AG04450 (cell line): ENCODE measurements at regions of chr5 and their contacts with region 1.

Region 1: DNA sequence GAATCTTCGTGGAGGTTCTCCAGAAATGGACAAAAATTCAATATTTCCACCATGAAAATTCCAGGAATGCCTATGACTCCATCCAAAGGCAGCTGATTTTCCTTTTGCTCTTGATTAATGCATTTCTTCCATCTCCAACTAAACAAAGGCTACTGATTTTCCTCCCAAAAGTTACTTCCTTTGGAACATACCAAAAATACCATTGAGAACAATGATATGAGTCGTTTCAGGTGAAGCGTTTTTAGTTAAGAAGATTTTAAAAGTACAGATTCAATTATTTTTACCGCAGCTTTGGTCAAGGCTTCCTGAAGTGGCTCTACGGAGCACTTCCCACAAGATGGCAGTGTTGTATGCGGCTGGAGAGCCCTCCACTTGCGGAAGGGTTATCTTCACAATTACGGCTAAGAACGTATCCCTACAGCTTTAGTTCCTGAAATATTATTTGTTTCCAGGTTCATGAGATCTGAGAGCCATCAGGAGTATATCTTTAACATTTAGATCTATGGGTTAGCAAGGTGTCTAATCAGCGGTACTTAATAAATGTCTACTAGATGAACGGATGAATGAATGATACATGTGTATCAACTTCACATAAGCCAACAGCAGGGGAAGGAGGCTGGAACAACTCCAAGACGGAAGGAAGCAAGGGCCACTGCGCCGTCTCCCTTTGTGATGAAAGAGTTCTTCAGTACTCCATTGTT is 35.9 kb upstream of the ARSB start:
- DNase-seq: peak; percentile 43
- H3K4me3 ChIP-seq: peak overlapping the region; percentile 15; the same call in 1 of the 2 replicates
- H3K27ac ChIP-seq: no peak overlapping the region
- H3K27me3 ChIP-seq: no peaks in the 10 kb centered on the region
- CTCF ChIP-seq: peak; percentile 90

Region 2: DNA sequence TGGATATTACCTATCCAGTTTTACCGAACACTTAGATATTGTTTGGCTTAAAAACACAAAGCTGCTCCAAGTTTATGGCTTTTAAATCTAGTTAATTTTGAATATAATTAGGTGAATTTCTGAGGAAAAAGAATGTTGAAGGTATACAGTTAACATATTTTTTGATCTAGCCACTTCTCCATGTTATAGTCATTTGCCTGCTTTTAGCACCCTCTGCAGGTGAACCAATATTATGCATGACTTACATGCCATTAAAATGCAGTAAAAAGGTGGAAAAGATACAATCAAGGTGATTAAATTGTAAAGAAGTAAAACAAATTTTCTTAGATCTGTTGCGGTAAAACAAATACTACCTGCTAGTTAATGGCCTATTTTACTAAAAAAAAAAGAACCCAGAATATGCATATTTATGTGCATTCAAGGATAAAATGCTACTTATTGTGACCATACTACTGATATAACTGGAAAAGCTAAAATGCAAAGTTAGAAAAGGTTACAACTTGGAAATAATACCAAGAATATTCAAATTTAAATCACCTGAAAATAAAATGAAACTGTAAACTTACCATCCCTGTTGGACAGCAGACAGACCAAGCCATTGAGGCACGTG is 858.7 kb before region 1 on chr5:
- CTCF ChIA-PET with region 1: no interaction called
- POLR2A ChIA-PET with region 1: no interaction called
- DNase-seq: no peak
- H3K4me3 ChIP-seq: no peak overlapping the region
- H3K27ac ChIP-seq: no peak overlapping the region
- H3K27me3 ChIP-seq: no peaks in the 10 kb centered on the region
- CTCF ChIP-seq: peak; percentile 60

Region 3: DNA sequence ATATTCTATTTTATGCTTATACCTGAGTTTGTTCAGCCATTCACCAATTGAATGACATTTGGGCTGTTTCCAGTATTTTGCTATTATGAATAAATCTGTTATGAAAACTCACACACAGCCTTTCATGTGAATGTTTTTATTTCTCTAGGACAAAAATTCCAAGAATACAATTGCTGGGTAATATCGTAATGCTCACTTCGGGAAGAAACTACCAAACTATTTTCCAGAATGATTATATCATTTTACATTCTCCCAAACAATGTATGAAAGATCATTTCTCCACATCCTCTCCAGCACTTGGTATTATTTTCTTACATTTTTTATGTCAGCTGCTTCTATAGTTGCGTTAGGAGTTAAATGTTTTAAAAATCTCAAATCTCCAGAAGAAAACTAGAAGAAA is 314.2 kb before region 1 on chr5:
- CTCF ChIA-PET with region 1: no interaction called
- POLR2A ChIA-PET with region 1: no interaction called
- DNase-seq: no peak
- H3K4me3 ChIP-seq: no peak overlapping the region
- H3K27ac ChIP-seq: no peak overlapping the region
- H3K27me3 ChIP-seq: no peaks in the 10 kb centered on the region
- CTCF ChIP-seq: no peak

Region 4: DNA sequence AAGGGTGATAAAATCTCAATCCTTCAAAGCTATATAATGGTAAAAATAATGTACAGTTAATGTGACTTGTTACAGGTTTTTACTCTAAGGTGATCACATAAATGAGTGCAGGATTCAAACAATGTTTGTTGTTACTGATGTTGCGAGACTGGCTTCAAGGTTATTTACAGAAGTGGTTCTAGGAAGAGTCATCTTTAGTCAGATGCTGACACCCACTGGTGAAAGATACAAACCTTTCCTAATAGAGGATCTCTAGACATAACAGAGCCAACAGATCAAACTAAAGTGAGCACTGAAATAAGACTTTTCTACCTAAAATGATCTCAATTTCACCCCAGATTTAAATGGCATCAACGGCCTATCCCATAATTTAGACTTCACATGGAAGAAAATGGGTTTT is 56.1 kb before region 1 on chr5:
- CTCF ChIA-PET with region 1: interaction called, 11 read pairs
- POLR2A ChIA-PET with region 1: no interaction called
- DNase-seq: peak; percentile 59
- H3K4me3 ChIP-seq: no peak overlapping the region
- H3K27ac ChIP-seq: no peak overlapping the region
- H3K27me3 ChIP-seq: no peaks in the 10 kb centered on the region
- CTCF ChIP-seq: peak; percentile 63

Region 5: DNA sequence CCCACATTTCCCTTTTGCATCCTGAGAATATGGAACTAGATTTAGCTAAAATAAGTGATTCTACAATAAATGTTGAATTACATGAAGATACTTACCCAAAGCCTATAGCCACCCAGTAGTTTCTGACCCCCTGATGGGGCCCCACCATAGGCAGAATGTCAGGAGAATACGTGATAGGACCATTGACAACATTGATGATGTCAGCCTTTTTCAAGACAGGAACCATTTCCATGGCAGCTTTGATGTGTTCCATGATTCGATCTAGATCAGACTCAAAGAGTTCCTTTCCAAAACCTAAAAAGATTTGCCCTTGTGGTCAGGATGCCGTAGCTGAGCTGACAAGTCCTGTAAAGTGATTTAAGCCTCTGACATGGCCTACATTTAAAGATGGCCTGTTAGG is 21.2 kb after region 1 on chr5:
- CTCF ChIA-PET with region 1: interaction called, 28 read pairs
- POLR2A ChIA-PET with region 1: no interaction called
- DNase-seq: no peak
- H3K4me3 ChIP-seq: no peak overlapping the region
- H3K27ac ChIP-seq: no peak overlapping the region
- H3K27me3 ChIP-seq: peaks cover 9% of the 10 kb centered on the region
- CTCF ChIP-seq: no peak

Region 6: GRCh38 chr5:79069488-79070349 is 48.7 kb after region 1 on chr5 and contains the starts of genes BHMT2 and DMGDH:
- CTCF ChIA-PET with region 1: interaction called, 17 read pairs
- POLR2A ChIA-PET with region 1: interaction called, 5 read pairs
- DNase-seq: no peak
- H3K4me3 ChIP-seq: peak within 1 kb of the TSS; percentile 46
- H3K27ac ChIP-seq: peak within 1 kb of the TSS; percentile 52
- H3K27me3 ChIP-seq: no peaks in the 10 kb centered on the region
- CTCF ChIP-seq: no peak
- polyA plus RNA-seq, gene BHMT2: 8.9 and 9.6 TPM in 2 replicates
- polyA plus RNA-seq, gene DMGDH: 1.7 and 1.9 TPM in 2 replicates

Region 7: DNA sequence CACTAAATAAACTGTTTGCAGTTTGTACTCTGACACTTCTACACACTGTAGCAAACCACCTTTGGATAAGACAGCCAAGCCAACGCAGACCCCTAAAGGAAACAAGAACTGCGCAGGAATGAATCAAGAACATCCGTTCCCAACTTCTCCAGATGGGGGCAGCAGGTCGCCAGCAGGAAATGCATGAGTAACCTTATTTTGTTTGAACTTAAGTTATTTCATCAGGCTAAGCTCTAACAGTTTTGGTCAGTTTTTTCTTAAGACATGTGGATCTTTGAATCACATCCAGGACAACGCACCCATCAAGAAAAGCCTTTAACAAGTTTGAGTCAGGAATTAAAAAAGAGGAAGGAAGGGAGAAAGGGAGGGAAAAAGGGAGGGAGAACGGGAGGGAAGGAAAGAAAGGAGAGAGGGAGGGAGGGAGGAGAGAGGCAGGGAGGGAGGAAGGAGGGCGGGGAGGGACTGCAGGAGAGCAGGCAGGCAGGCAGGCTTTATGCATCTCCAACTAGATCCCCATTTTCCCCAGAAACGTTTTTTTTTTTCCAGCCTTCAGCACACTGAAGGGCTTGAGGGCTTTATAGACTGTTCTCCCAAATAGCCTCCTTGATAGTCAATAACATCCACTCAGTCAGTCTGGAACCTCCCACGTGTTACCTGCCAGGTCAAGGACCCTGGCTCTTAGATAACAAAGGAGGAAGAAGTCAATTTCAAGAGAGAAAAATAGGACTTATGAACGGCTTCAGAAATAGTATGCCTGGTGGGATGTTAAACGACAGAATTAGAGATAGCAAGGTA is 112.8 kb after region 1 on chr5:
- CTCF ChIA-PET with region 1: interaction called, 920 read pairs
- POLR2A ChIA-PET with region 1: no interaction called
- DNase-seq: peak; percentile 71
- H3K4me3 ChIP-seq: peak overlapping the region; percentile 48
- H3K27ac ChIP-seq: peak overlapping the region; percentile 80
- H3K27me3 ChIP-seq: peaks cover 5% of the 10 kb centered on the region
- CTCF ChIP-seq: peak; percentile 89

Region 8: DNA sequence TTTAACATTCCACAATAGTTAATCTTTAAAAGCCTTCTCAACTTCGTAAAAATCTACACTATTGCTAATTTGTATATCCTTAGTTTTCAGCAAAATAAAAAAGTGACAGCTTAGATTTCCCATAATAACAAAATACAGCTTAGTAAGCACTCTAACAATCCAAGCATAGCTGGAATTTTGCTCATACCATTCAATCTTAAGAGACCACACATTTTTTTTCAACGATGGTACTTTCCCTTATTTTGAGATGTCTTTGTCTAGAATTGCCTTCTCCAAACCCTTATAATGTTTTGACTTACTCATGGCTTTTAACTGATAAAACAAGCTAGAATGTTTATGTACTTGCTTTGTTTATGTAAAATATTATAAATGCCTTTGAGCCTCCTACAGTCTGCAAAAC is 427.3 kb after region 1 on chr5:
- CTCF ChIA-PET with region 1: interaction called, 19 read pairs
- POLR2A ChIA-PET with region 1: no interaction called
- DNase-seq: no peak
- H3K4me3 ChIP-seq: no peak overlapping the region
- H3K27ac ChIP-seq: no peak overlapping the region
- H3K27me3 ChIP-seq: no peaks in the 10 kb centered on the region
- CTCF ChIP-seq: no peak

Region 9: GRCh38 chr5:80083101-80083890 is 1062.3 kb after region 1 on chr5:
- CTCF ChIA-PET with region 1: interaction called, 20 read pairs
- POLR2A ChIA-PET with region 1: no interaction called
- DNase-seq: peak; percentile 29
- H3K4me3 ChIP-seq: no peak overlapping the region
- H3K27ac ChIP-seq: no peak overlapping the region
- H3K27me3 ChIP-seq: peaks cover 4% of the 10 kb centered on the region
- CTCF ChIP-seq: peak; percentile 75